Colonic mucosa (tissue), 4 donors: ENCODE measurements at regions of chr20 and their contacts with region 1.

Region 1: GRCh38 chr20:8756410-8756809 is 312.5 kb upstream of the PLCB4 start:
- DNase-seq: no peak
- H3K4me3 ChIP-seq: no peak overlapping the region
- H3K27ac ChIP-seq: no peak overlapping the region
- H3K4me1 ChIP-seq: no peaks in the 10 kb centered on the region
- H3K27me3 ChIP-seq: no peaks in the 10 kb centered on the region
- CTCF ChIP-seq: no peak

Region 2: DNA sequence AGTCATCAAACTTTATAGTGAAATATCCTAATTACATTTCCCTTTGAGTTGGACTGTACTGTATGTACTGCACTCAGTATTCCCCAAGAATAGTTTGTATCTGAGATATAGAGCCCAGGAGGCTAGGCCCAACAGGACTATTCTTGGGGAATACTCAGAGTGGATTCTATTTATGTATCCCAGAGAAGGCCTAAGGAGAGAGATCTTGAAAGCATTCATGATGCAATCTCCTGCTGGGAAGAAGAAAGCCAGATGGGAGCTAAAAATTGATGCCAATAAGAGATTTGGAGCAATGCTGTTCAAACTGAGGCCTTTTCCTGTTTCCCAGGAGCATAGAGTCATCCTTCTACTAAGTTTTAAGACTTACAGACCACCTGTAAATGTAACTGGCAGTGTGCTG is 139.6 kb before region 1 on chr20:
- intact Hi-C with region 1: no loop called
- DNase-seq: no peak
- H3K4me3 ChIP-seq: no peak overlapping the region
- H3K27ac ChIP-seq: no peak overlapping the region
- H3K4me1 ChIP-seq: no peaks in the 10 kb centered on the region
- H3K27me3 ChIP-seq: no peaks in the 10 kb centered on the region
- CTCF ChIP-seq: no peak

Region 3: GRCh38 chr20:8812817-8813216 is 56.4 kb after region 1 on chr20:
- intact Hi-C with region 1: no loop called
- DNase-seq: no peak
- H3K4me3 ChIP-seq: no peak overlapping the region
- H3K27ac ChIP-seq: no peak overlapping the region
- H3K4me1 ChIP-seq: no peaks in the 10 kb centered on the region
- H3K27me3 ChIP-seq: no peaks in the 10 kb centered on the region
- CTCF ChIP-seq: no peak

Region 4: GRCh38 chr20:8853805-8854338 is 97.5 kb after region 1 on chr20:
- intact Hi-C with region 1: loop called (anchors 10 kb)
- DNase-seq: peak; percentile 37
- H3K4me3 ChIP-seq: no peak overlapping the region
- H3K27ac ChIP-seq: no peak overlapping the region
- H3K4me1 ChIP-seq: no peaks in the 10 kb centered on the region
- H3K27me3 ChIP-seq: no peaks in the 10 kb centered on the region
- CTCF ChIP-seq: peak; percentile 79